Heart right ventricle (tissue), 16 donors: ENCODE measurements at regions of chr12 and their contacts with region 1.

Region 1: GRCh38 chr12:43241986-43242385 is 310.0 kb downstream of the ADAMTS20 start:
- DNase-seq: no peak
- ATAC-seq: no peak
- H3K4me3 ChIP-seq: no peak overlapping the region
- H3K27ac ChIP-seq: no peak overlapping the region
- H3K4me1 ChIP-seq: no peaks in the 10 kb centered on the region
- H3K27me3 ChIP-seq: no peaks in the 10 kb centered on the region
- CTCF ChIP-seq: no peak

Region 2: GRCh38 chr12:43087195-43088091 is 154.5 kb before region 1 on chr12:
- intact Hi-C with region 1: no loop called
- DNase-seq: no peak
- ATAC-seq: no peak
- H3K4me3 ChIP-seq: no peak overlapping the region
- H3K27ac ChIP-seq: no peak overlapping the region
- H3K4me1 ChIP-seq: no peaks in the 10 kb centered on the region
- H3K27me3 ChIP-seq: no peaks in the 10 kb centered on the region
- CTCF ChIP-seq: no peak

Region 3: GRCh38 chr12:43198608-43199007 is 43.4 kb before region 1 on chr12:
- intact Hi-C with region 1: loop called in 1 of 10 experiments (anchors 10 kb)
- DNase-seq: no peak
- ATAC-seq: no peak
- H3K4me3 ChIP-seq: no peak overlapping the region
- H3K27ac ChIP-seq: no peak overlapping the region
- H3K4me1 ChIP-seq: no peaks in the 10 kb centered on the region
- H3K27me3 ChIP-seq: no peaks in the 10 kb centered on the region
- CTCF ChIP-seq: no peak